ENCODE measurements at regions of chr3 and their contacts with region 1.

Region 1: DNA sequence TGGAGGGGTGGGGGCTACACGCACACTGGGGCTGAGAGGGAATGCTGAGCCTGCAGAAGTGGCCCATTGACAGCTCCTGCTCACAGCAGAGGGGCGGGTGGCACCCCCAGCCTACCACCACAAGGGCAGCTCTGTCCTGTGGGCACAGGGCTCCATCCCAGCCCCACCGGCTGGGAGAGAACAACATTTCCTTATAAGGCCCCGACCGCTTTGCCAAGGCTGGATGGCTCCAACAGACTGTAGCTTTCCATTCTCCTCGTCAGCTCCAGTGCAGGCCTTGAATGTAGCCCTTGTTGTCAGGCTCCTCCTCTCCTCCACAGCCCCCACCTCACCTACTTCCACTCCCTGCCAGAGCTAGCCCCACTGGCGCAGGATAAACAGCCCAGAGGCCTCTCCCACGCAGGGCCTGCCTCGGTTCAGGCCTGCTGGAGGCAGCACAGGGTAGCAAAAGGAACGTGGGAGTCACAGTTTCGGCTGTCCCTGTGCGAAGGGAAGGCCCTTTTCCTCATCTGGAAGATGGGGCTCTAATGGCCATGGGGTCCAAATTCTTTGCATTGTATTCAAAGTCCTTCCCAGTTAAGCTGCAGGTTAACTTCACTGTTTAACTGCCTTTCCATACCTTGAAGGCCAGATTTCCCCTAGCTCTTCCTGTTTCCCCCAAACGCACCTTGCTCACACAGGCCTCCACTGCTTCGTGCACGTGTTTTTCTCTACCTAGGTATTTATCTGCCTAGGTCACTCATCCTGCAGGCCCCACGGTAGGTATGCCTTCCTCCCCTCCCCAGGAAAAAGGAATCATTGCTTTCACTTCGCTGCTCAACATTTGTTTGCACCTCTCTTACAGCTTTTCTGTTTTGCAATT is 101.6 kb upstream of the LPP start:
- DNase-seq: peak; percentile 76
- H3K4me3 ChIP-seq: no peak overlapping the region
- H3K4me3 Mint-ChIP-seq: peak overlapping the region; percentile 48
- H3K27ac Mint-ChIP-seq: peak overlapping the region; percentile 69
- H3K4me1 ChIP-seq: peaks cover 61% of the 10 kb centered on the region
- H3K4me1 Mint-ChIP-seq: peaks cover 25% of the 10 kb centered on the region
- H3K27me3 ChIP-seq: no peaks in the 10 kb centered on the region
- H3K27me3 Mint-ChIP-seq: no peaks in the 10 kb centered on the region
- CTCF ChIP-seq: peak in 1 of 2 experiments; percentile 20

Region 2: DNA sequence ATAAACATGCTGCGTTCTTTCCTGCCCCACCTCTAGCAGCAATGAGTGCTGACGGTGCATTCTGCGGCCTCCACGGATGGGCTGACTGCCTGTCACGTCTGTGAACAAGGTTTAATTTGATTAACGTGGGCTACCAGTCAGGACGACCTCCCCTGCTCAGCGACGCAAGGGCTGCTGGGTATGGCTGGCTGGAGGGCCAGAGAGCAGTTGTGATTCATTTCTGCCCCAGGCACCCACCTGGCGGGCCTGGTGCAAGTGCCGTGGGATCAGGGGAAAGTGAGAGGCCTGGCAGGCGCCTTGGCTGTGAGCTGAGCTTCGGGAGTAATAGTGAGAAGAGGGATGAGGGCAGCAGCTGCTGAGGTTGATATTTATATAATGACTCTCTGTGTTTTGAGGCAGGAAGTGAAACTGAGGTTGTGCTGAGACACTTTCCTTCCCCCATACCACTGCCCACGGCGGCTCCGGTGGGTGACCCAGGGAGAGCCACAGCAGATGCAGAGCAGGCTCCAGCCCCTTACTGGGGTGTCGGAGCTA is 116.7 kb before region 1 on chr3:
- CTCF ChIA-PET with region 1: no interaction called
- POLR2A ChIA-PET with region 1: no interaction called
- intact Hi-C with region 1: no loop called
- DNase-seq: no peak
- H3K4me3 ChIP-seq: no peak overlapping the region
- H3K4me3 Mint-ChIP-seq: no peak overlapping the region
- H3K27ac Mint-ChIP-seq: no peak overlapping the region
- H3K4me1 ChIP-seq: no peaks in the 10 kb centered on the region
- H3K4me1 Mint-ChIP-seq: no peaks in the 10 kb centered on the region
- H3K27me3 ChIP-seq: no peaks in the 10 kb centered on the region
- H3K27me3 Mint-ChIP-seq: no peaks in the 10 kb centered on the region
- CTCF ChIP-seq: no peak

Region 3: DNA sequence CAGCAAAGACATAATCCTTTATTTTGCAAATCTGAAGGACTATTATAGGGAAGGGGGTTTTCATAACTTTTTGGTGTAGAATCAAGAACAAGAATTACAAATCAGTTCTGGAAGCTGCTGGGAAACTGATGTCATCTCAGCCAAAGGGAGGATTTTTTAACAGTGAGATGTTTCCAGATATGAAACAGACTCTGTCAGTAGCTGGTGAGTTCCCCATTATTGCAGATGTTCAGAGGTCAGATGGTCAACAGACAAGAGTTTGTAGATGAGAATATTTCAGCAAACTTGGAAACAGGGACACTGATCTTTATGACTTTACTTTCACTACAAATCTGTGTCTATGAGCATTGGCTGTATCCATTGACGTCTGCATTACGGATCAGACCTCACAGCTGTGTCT is 29.6 kb after region 1 on chr3:
- CTCF ChIA-PET with region 1: interaction called, 4 read pairs
- POLR2A ChIA-PET with region 1: no interaction called
- intact Hi-C with region 1: loop called (anchors 1 kb)
- DNase-seq: no peak
- H3K4me3 ChIP-seq: no peak overlapping the region
- H3K4me3 Mint-ChIP-seq: no peak overlapping the region
- H3K27ac Mint-ChIP-seq: no peak overlapping the region
- H3K4me1 ChIP-seq: peaks cover 34% of the 10 kb centered on the region
- H3K4me1 Mint-ChIP-seq: peaks cover 47% of the 10 kb centered on the region
- H3K27me3 ChIP-seq: no peaks in the 10 kb centered on the region
- H3K27me3 Mint-ChIP-seq: no peaks in the 10 kb centered on the region
- CTCF ChIP-seq: no peak

Region 4: DNA sequence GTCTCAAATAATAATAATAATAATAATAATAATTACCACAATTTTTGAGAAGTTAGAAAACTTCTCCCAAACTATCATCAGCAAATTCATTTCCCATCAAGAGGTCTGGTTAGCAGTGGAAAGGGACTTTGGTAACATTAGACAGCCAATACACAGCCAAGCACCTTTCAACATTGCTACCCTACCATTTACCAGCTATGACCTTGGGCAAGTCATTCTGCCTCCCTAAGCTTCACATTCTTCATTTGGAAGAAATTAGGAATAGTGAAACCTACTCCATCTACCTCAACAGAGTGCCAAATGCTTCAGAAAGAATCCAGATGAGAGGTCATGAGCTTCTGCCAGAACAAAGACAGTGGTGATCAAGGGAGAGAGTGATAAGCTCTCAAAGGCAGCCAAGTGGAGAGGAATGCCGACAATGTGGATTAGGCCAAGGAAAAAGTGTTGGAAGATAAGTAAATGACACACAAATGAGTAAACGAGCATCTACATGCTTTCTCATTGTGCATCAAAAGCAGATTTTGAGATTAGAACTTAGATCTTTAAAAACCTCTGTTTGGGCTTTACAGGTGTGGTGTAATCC is 58.7 kb after region 1 on chr3:
- CTCF ChIA-PET with region 1: no interaction called
- POLR2A ChIA-PET with region 1: no interaction called
- intact Hi-C with region 1: loop called (anchors 1 kb)
- DNase-seq: peak; percentile 44 to 70
- H3K4me3 ChIP-seq: no peak overlapping the region
- H3K4me3 Mint-ChIP-seq: no peak overlapping the region
- H3K27ac Mint-ChIP-seq: peak overlapping the region; percentile 29
- H3K4me1 ChIP-seq: peaks cover 22% of the 10 kb centered on the region
- H3K4me1 Mint-ChIP-seq: peaks cover 27% of the 10 kb centered on the region
- H3K27me3 ChIP-seq: no peaks in the 10 kb centered on the region
- H3K27me3 Mint-ChIP-seq: no peaks in the 10 kb centered on the region
- CTCF ChIP-seq: no peak

Region 5: GRCh38 chr3:188123170-188123905 is 70.9 kb after region 1 on chr3:
- CTCF ChIA-PET with region 1: no interaction called
- POLR2A ChIA-PET with region 1: interaction called, 3 read pairs
- intact Hi-C with region 1: loop called (anchors 1 kb)
- DNase-seq: peak; percentile 64 to 65
- H3K4me3 ChIP-seq: no peak overlapping the region
- H3K4me3 Mint-ChIP-seq: peak overlapping the region; percentile 58
- H3K27ac Mint-ChIP-seq: peak overlapping the region; percentile 85
- H3K4me1 ChIP-seq: peaks cover 44% of the 10 kb centered on the region
- H3K4me1 Mint-ChIP-seq: peaks cover 38% of the 10 kb centered on the region
- H3K27me3 ChIP-seq: no peaks in the 10 kb centered on the region
- H3K27me3 Mint-ChIP-seq: no peaks in the 10 kb centered on the region
- CTCF ChIP-seq: no peak

Region 6: GRCh38 chr3:188154014-188154808 is 101.8 kb after region 1 on chr3 and contains the start of gene LPP:
- CTCF ChIA-PET with region 1: interaction called, 6 read pairs
- POLR2A ChIA-PET with region 1: interaction called, 14 read pairs
- intact Hi-C with region 1: loop called (anchors 2 kb)
- DNase-seq: peak; percentile 79 to 86
- H3K4me3 ChIP-seq: peak within 1 kb of the TSS; percentile 68
- H3K4me3 Mint-ChIP-seq: peak within 1 kb of the TSS; percentile 84
- H3K27ac Mint-ChIP-seq: peak within 1 kb of the TSS; percentile 89
- H3K4me1 ChIP-seq: peaks cover 66% of the 10 kb centered on the region
- H3K4me1 Mint-ChIP-seq: peaks cover 48% of the 10 kb centered on the region
- H3K27me3 ChIP-seq: no peaks in the 10 kb centered on the region
- H3K27me3 Mint-ChIP-seq: no peaks in the 10 kb centered on the region
- CTCF ChIP-seq: peak in 1 of 2 experiments; percentile 27
- total RNA-seq, gene LPP: 120 and 147 TPM in 2 replicates

Region 7: GRCh38 chr3:188164248-188164687 is 111.9 kb after region 1 on chr3:
- CTCF ChIA-PET with region 1: no interaction called
- POLR2A ChIA-PET with region 1: no interaction called
- intact Hi-C with region 1: no loop called
- DNase-seq: no peak
- H3K4me3 ChIP-seq: no peak overlapping the region
- H3K4me3 Mint-ChIP-seq: no peak overlapping the region
- H3K27ac Mint-ChIP-seq: peak overlapping the region; percentile 48
- H3K4me1 ChIP-seq: peaks cover 38% of the 10 kb centered on the region
- H3K4me1 Mint-ChIP-seq: peaks cover 23% of the 10 kb centered on the region
- H3K27me3 ChIP-seq: no peaks in the 10 kb centered on the region
- H3K27me3 Mint-ChIP-seq: no peaks in the 10 kb centered on the region
- CTCF ChIP-seq: no peak

Region 8: GRCh38 chr3:188197388-188197847 is 145.0 kb after region 1 on chr3:
- CTCF ChIA-PET with region 1: no interaction called
- POLR2A ChIA-PET with region 1: no interaction called
- intact Hi-C with region 1: no loop called
- DNase-seq: no peak
- H3K4me3 ChIP-seq: no peak overlapping the region
- H3K4me3 Mint-ChIP-seq: no peak overlapping the region
- H3K27ac Mint-ChIP-seq: no peak overlapping the region
- H3K4me1 ChIP-seq: no peaks in the 10 kb centered on the region
- H3K4me1 Mint-ChIP-seq: peaks cover 19% of the 10 kb centered on the region
- H3K27me3 ChIP-seq: no peaks in the 10 kb centered on the region
- H3K27me3 Mint-ChIP-seq: no peaks in the 10 kb centered on the region
- CTCF ChIP-seq: no peak

Region 9: DNA sequence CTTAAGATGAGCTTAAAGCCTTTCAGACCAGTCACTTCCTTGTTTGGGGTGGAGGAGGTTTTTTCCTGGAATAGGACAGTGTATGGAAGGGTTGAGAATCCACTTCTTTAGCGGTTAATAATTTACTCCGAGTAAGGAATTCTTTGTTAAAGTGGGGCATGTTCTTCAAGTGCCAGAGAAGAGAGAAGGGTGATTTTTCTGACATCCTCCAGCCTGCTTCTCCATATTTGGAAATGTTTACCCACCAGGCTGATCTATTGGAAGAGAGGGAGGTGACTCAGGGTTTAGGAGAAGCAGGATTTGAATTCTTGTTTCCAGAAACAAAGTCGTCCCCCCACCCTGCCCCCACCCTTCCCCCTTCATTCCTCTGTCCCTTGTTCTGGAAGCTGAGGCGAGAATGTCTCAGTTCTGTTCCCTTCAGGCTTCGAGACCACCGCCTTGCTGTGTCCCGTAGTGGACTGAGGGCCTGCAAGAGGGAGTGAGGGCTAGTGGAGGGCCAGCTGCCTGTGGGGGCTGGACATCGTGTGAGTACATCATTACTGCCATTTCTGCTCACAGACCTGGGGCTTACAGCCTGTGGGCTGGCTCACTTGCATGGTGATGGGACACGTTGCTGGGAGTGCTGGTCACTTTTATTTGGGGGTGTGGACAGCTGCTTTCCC is 160.0 kb after region 1 on chr3:
- CTCF ChIA-PET with region 1: interaction called, 4 read pairs
- POLR2A ChIA-PET with region 1: interaction called, 3 read pairs
- intact Hi-C with region 1: loop called (anchors 1 kb)
- DNase-seq: peak; percentile 55 to 60
- H3K4me3 ChIP-seq: no peak overlapping the region
- H3K4me3 Mint-ChIP-seq: peak overlapping the region; percentile 44
- H3K27ac Mint-ChIP-seq: peak overlapping the region; percentile 79
- H3K4me1 ChIP-seq: peaks cover 60% of the 10 kb centered on the region
- H3K4me1 Mint-ChIP-seq: peaks cover 35% of the 10 kb centered on the region
- H3K27me3 ChIP-seq: no peaks in the 10 kb centered on the region
- H3K27me3 Mint-ChIP-seq: no peaks in the 10 kb centered on the region
- CTCF ChIP-seq: no peak

Region 10: GRCh38 chr3:188270423-188270972 is 218.1 kb after region 1 on chr3:
- CTCF ChIA-PET with region 1: no interaction called
- POLR2A ChIA-PET with region 1: no interaction called
- intact Hi-C with region 1: loop called (anchors 1 kb)
- DNase-seq: peak; percentile 71 to 78
- H3K4me3 ChIP-seq: no peak overlapping the region
- H3K4me3 Mint-ChIP-seq: peak overlapping the region; percentile 47
- H3K27ac Mint-ChIP-seq: peak overlapping the region; percentile 77
- H3K4me1 ChIP-seq: peaks cover 75% of the 10 kb centered on the region
- H3K4me1 Mint-ChIP-seq: peaks cover 40% of the 10 kb centered on the region
- H3K27me3 ChIP-seq: no peaks in the 10 kb centered on the region
- H3K27me3 Mint-ChIP-seq: no peaks in the 10 kb centered on the region
- CTCF ChIP-seq: no peak

Measured in Caco-2 (cell line).